BJ (cell line): ENCODE measurements at regions of chr7 and their contacts with region 1.

Region 1: DNA sequence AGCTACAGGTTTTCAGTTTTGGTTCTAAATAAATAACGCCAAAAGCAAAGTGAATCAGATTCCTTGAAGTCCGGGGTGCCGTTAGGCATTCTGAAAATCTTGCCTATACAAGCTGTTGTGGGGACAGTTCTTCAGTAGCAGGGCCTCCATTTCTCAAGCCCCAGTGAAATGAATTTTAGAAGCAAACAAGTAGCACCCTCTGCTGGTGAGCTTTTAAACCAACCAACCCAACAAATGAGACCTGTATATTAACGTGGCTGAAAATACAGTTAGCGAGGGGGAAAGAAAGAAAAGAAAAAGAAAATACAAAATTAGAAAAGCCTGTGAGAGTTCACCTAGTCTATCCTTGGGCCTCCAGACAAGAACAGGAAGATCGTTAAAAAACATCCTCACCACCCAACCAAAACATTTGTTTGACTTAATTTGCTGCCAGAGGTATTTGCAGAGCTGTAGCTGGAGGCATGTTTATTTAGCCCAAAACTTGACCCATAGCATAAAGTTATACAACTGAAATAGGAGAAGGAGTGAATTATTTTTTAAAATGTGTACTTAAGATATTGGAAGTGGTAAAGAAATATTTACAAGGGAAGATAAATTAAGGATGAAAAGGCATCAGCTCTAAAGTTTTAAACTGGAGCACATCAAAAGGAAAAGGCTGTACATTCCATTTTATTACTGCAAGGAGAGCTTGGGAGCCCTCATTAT is 98.9 kb downstream of the DYNC1I1 start:
- DNase-seq: no peak
- H3K4me3 ChIP-seq: no peak overlapping the region
- H3K27me3 ChIP-seq: no peaks in the 10 kb centered on the region
- CTCF ChIP-seq: peak; percentile 65

Region 2: DNA sequence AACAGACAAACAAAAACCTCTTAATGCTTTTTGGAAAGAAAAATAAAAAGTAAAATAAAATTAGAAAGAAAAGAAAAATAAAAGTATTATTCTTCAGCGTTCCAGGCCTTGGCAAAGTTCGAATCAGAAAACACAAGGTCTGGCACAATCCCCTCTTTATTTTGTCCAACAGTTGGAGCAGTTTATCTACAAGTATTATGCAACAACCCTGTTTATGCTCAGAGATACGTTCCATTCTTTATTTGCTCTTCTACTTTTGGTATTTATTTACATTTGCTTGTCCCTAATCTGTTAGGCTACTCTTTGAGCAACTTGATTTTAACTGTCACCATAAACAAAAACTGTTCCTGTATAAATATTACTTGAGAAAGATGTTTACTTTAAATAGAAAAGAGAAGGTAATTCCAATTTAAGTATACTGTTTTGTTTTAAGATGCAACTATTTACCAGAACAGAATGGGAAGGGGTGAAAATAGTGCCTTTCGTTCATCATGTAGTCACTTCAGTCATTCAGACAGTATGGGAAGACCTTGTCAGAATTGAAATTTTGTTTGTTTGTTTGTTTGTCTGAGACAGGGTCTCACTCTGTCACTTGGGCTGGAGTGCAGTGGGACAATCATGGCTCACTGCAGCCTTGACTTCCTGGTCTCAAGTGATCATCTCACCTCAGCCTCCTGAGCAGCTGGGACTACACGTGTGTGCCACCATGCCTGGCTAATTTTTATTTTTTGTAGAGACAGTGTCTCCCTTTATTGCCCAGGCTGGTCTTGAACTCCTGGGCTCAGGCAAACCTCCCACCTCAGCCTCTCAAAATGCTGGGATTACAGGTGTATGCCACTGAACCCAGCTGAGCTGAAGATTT is 280.6 kb before region 1 on chr7:
- CTCF ChIA-PET with region 1: no interaction called
- POLR2A ChIA-PET with region 1: no interaction called
- DNase-seq: no peak
- H3K4me3 ChIP-seq: no peak overlapping the region
- H3K27me3 ChIP-seq: no peaks in the 10 kb centered on the region
- CTCF ChIP-seq: no peak

Region 3: GRCh38 chr7:95723592-95724180 is 147.5 kb before region 1 on chr7:
- CTCF ChIA-PET with region 1: interaction called, 43 read pairs
- POLR2A ChIA-PET with region 1: no interaction called
- DNase-seq: peak; percentile 4
- H3K4me3 ChIP-seq: no peak overlapping the region
- H3K27me3 ChIP-seq: no peaks in the 10 kb centered on the region
- CTCF ChIP-seq: peak; percentile 39

Region 4: DNA sequence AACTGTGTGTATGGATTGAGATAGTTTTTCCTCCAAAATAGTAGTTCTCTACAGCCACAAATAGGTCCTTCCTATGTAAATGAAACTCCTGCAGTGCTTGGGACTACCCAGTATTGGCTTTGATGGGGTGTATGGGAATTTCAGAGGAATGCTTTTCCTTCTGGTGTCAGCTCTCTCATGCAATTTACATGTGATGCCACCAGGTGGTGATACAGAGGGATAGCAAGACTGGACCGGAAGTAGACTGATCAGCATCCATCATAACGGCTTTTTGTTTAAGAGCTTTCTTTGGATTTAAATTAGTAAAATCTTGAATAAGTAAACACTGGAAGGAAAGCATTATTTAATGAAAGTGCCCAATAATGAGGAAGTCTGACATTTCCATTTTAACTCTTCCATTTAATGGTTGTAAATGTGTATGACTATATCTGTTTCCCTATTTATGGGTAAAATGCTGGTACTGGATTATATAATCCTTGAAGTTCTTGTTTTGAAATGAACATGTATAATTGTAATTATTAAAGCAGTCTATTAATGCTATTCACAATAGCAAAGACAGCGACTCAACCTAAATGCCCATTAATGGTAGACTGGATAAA is 76.2 kb before region 1 on chr7:
- CTCF ChIA-PET with region 1: interaction called, 14 read pairs
- POLR2A ChIA-PET with region 1: no interaction called
- DNase-seq: no peak
- H3K4me3 ChIP-seq: no peak overlapping the region
- H3K27me3 ChIP-seq: no peaks in the 10 kb centered on the region; the same call in 1 of the 2 replicates
- CTCF ChIP-seq: peak; percentile 54

Region 5: DNA sequence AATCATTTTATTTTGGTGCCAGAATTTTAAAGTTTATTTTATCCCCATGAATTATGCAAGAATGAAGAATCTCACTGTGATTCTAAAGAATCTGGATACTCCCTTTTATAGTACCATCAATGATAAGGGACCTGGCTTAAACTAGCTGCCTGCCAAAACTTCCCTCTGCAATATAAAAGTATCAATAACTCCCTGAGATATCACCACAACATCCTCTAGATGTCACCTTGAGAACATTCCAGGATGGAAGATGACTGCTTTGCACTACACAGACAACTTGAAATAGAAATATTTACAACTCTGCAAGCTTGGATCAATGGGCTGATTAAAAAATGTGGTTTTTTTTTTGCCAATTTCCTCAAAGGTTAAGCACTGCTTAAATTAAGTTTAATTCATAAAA is 308.6 kb after region 1 on chr7:
- CTCF ChIA-PET with region 1: no interaction called
- POLR2A ChIA-PET with region 1: no interaction called
- DNase-seq: no peak
- H3K4me3 ChIP-seq: no peak overlapping the region
- H3K27me3 ChIP-seq: no peaks in the 10 kb centered on the region
- CTCF ChIP-seq: 0 out of 2 replicates have a peak, but pooled peaks have one; percentile 9